ENCODE measurements at regions of chr14 and their contacts with region 1.

Region 1: DNA sequence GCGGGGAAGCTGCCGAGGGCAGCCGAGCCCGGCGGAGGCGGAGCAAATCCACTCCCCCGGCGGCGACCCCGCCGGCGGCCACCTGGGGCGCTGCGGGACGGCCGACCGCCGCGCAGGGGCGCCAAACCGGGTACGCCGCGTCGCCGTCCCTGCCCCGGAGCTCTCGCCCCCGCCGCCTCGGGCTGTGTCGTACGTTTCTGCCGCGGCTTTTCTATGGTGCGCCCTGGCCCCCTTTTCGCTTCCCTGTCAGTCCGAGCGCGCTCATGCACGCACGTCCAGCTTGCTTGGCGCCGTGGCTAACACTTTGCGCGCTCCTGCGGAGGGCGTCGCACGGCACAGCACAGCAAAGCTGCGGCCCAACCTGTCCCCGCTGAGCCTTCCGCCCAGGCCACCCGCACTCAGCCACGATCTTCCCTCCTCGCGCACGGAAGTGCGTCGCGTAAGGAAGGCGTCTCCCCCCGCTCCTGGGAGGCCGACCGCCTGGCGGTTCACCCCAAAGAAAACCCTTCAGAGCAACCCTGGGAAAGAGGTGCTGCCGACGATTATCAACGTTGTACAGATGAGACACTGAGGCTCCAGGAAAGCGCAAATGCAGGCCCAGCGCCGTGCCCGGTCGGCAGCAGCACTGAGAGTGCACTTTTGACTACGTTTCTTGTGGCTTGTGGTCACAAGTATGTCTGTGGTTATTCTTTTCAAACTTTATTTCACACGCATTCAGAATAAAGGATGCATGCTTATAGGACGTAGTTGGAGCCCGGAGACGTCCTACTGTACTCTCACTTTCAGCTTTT is at the start of gene HECTD1:
- DNase-seq: peak; percentile 89
- H3K4me3 Mint-ChIP-seq: peak within 1 kb of the TSS; percentile 92
- H3K27ac Mint-ChIP-seq: peak within 1 kb of the TSS; percentile 100
- H3K4me1 Mint-ChIP-seq: peaks cover 34% of the 10 kb centered on the region
- H3K27me3 Mint-ChIP-seq: no peaks in the 10 kb centered on the region
- total RNA-seq, gene HECTD1: 61.5 to 64.1 TPM

Region 2: GRCh38 chr14:30974628-30975027 is 233.3 kb before region 1 on chr14:
- CTCF ChIA-PET with region 1: interaction called, 3 read pairs
- intact Hi-C with region 1: loop called (anchors 5 kb)
- DNase-seq: no peak
- H3K4me3 Mint-ChIP-seq: no peak overlapping the region
- H3K27ac Mint-ChIP-seq: no peak overlapping the region
- H3K4me1 Mint-ChIP-seq: peaks cover 52% of the 10 kb centered on the region
- H3K27me3 Mint-ChIP-seq: no peaks in the 10 kb centered on the region

Region 3: GRCh38 chr14:31127690-31128089 is 80.3 kb before region 1 on chr14:
- CTCF ChIA-PET with region 1: interaction called, 3 read pairs
- intact Hi-C with region 1: loop called (anchors 1 kb)
- DNase-seq: peak; percentile 10
- H3K4me3 Mint-ChIP-seq: no peak overlapping the region
- H3K27ac Mint-ChIP-seq: no peak overlapping the region
- H3K4me1 Mint-ChIP-seq: peaks cover 27% of the 10 kb centered on the region
- H3K27me3 Mint-ChIP-seq: no peaks in the 10 kb centered on the region

Region 4: GRCh38 chr14:31243860-31244259 is 35.9 kb after region 1 on chr14:
- CTCF ChIA-PET with region 1: no interaction called
- intact Hi-C with region 1: no loop called
- DNase-seq: peak; percentile 43
- H3K4me3 Mint-ChIP-seq: no peak overlapping the region
- H3K27ac Mint-ChIP-seq: no peak overlapping the region
- H3K4me1 Mint-ChIP-seq: peaks cover 18% of the 10 kb centered on the region
- H3K27me3 Mint-ChIP-seq: no peaks in the 10 kb centered on the region

Region 5: DNA sequence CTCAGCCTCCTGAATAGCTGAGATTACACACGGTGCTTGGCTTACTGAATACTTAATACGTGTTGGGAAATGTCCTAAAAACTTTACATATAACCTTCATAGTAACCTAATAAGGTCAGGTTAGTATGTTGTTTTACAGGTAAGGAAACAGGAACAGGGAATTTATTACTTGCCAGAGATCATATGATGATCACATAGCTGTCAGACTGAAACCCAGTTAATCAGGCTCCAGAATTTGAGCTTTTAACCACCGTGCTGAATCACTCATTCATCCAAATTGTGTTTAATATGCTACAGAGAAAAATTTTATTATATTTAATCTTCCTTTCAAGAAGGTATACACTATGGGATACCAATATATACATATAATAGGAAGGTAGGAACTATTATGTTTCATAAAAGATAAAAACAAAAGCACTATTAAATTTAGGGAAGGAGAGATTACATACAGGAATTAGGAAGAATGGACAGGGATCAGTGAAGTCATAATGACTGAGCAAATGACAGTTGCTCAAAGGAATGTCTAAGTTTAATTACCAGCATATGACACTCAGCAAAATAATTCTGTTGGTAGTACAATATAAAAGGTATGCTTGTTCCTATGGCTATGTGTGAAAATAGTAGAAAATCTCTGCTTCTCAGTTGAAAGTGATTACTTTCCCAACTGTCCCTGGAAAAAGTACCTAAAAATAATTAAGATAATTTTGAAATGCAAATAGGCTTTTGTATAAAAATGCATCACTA is 153.1 kb after region 1 on chr14:
- CTCF ChIA-PET with region 1: interaction called, 3 read pairs
- intact Hi-C with region 1: loop called (anchors 1 kb)
- DNase-seq: no peak
- H3K4me3 Mint-ChIP-seq: no peak overlapping the region
- H3K27ac Mint-ChIP-seq: no peak overlapping the region
- H3K4me1 Mint-ChIP-seq: no peaks in the 10 kb centered on the region
- H3K27me3 Mint-ChIP-seq: no peaks in the 10 kb centered on the region

Region 6: DNA sequence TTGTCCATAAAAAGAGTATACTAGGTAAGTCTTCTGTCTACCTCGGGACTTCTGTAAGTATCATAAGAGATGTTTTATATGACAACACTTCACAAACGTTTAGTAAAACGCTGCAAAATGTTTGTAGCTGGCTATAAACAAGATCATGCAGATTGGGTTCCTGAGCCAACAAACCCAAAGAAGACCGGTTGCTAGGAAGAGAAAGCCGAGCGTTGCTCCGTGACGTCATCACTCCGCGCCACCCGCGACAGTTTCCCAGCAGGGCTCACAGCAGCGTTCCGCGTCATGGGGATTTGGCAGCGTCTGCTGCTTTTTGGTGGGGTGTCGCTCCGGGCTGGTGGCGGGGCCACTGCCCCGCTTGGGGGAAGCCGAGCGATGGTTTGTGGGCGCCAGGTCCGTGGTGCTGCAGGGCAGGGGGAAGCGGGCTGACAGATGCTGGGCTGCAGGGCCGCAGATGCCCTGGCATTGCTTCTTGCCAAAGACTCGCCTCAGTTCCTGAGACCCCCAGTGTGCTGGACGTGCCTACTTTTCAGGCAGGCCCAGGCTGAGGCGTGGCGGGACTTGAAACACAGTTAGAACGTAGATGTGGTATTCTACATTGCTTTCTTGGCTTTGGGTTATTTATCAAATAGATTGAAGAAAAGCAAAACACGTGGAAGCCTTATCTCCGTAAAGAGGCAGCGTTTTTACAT is 353.4 kb after region 1 on chr14 and contains the start of gene NUBPL:
- CTCF ChIA-PET with region 1: no interaction called
- intact Hi-C with region 1: loop called (anchors 1 kb)
- DNase-seq: peak; percentile 98
- H3K4me3 Mint-ChIP-seq: peak within 1 kb of the TSS; percentile 96
- H3K27ac Mint-ChIP-seq: peak within 1 kb of the TSS; percentile 92
- H3K4me1 Mint-ChIP-seq: peaks cover 23% of the 10 kb centered on the region
- H3K27me3 Mint-ChIP-seq: no peaks in the 10 kb centered on the region
- total RNA-seq, gene NUBPL: 11.5 to 13.5 TPM

Region 7: DNA sequence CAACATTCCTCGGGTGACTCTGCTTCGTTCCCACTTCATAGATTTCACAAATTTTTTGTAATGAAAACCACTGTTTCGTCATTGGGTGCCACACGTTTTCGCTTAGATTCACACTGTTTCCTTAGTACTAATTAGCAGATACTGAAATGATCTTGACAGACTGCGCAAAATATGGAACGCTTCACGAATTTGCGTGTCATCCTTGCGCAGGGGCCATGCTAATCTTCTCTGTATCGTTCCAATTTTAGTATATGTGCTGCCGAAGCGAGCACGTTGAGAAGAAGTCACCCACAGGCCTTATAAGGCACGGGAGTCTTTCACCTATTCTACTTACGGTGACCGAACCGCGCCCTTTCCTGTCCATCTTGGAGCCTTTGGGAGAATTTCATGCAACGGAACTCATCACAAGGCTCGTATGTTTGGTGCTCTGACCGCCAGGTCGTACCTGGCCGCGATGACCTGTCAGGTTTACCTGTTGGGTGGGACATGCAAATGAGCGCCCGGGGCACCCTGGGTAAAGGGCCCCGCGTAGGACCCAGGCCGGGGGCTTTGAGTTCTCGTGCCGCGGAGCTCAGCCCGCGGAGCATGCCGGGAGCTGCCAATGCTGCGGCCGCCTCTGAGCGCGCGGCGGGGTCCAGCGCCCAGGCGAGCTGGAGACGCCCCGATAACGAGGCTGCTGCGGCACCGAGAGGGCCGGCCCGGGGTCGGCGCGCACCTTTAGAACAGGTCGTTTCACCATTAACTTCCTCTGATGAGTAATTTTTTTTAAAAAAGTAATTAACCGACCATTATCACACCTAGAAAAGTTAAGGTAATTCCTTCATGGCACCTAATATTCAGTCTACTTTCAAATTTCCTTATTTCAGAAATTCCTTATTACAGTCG is 995.3 kb after region 1 on chr14 and contains the start of gene RNU6-8:
- CTCF ChIA-PET with region 1: no interaction called
- intact Hi-C with region 1: loop called (anchors 2 kb)
- DNase-seq: peak; percentile 86
- H3K4me3 Mint-ChIP-seq: peak within 1 kb of the TSS; percentile 89
- H3K27ac Mint-ChIP-seq: peak within 1 kb of the TSS; percentile 99
- H3K4me1 Mint-ChIP-seq: peaks cover 35% of the 10 kb centered on the region
- H3K27me3 Mint-ChIP-seq: no peaks in the 10 kb centered on the region
- total RNA-seq, gene RNU6-8: not detected